CD4-positive, alpha-beta memory T cell (primary cell): ENCODE measurements at regions of chr15 and their contacts with region 1.

Region 1: DNA sequence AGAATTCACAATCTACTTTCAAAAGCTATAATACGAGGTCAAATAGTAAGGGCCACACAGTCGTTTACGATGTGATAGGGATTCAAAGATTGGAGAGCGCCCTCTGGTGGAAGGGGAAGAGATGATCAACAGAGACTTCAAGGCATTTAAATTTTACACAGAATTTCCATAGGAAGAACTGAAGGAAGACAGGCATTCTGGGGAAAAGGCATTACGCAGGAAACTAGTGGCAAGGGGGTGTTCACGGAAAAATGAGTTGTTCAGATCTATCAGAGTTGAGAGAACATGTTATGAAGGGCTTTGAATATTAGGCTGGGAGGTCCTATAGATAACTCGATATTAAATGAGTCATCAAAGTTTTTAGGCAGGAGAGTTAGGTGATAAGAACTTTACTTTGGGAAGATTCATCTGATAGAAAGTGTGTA is 128.7 kb downstream of the FRMD5 start:
- DNase-seq: peak; percentile 33 to 42 (median 38)
- H3K4me3 ChIP-seq: no peak overlapping the region
- H3K4me3 Mint-ChIP-seq: peak overlapping the region in 1 of 8 donors; percentile 9
- H3K27ac ChIP-seq: no peak overlapping the region
- H3K27ac Mint-ChIP-seq: no peak overlapping the region
- H3K4me1 ChIP-seq: no peaks in the 10 kb centered on the region
- H3K4me1 Mint-ChIP-seq: peaks cover 0 to 3% (median 1%) of the 10 kb centered on the region in 4 donors
- H3K27me3 ChIP-seq: no peaks in the 10 kb centered on the region
- H3K27me3 Mint-ChIP-seq: peaks cover 9% of the 10 kb centered on the region in 2 donors

Region 2: GRCh38 chr15:43930079-43930478 is 136.2 kb before region 1 on chr15:
- CTCF ChIA-PET with region 1: no interaction called
- POLR2A ChIA-PET with region 1: no interaction called
- intact Hi-C with region 1: no loop called
- DNase-seq: no peak
- H3K4me3 ChIP-seq: no peak overlapping the region
- H3K4me3 Mint-ChIP-seq: no peak overlapping the region
- H3K27ac ChIP-seq: no peak overlapping the region
- H3K27ac Mint-ChIP-seq: peak overlapping the region in 1 of 7 donors; percentile 14
- H3K4me1 ChIP-seq: no peaks in the 10 kb centered on the region
- H3K4me1 Mint-ChIP-seq: no peaks in the 10 kb centered on the region
- H3K27me3 ChIP-seq: no peaks in the 10 kb centered on the region
- H3K27me3 Mint-ChIP-seq: peaks cover 6 to 9% of the 10 kb centered on the region in 2 donors

Region 3: GRCh38 chr15:44053458-44053857 is 12.9 kb before region 1 on chr15:
- CTCF ChIA-PET with region 1: interaction called, 10 read pairs
- POLR2A ChIA-PET with region 1: no interaction called
- intact Hi-C with region 1: no loop called
- DNase-seq: no peak
- H3K4me3 ChIP-seq: no peak overlapping the region
- H3K4me3 Mint-ChIP-seq: no peak overlapping the region
- H3K27ac ChIP-seq: no peak overlapping the region
- H3K27ac Mint-ChIP-seq: no peak overlapping the region
- H3K4me1 ChIP-seq: no peaks in the 10 kb centered on the region
- H3K4me1 Mint-ChIP-seq: no peaks in the 10 kb centered on the region
- H3K27me3 ChIP-seq: no peaks in the 10 kb centered on the region
- H3K27me3 Mint-ChIP-seq: peaks cover 13 to 19% of the 10 kb centered on the region in 2 donors